Panc1 (cell line): ENCODE measurements at regions of chr3 and their contacts with region 1.

Region 1: DNA sequence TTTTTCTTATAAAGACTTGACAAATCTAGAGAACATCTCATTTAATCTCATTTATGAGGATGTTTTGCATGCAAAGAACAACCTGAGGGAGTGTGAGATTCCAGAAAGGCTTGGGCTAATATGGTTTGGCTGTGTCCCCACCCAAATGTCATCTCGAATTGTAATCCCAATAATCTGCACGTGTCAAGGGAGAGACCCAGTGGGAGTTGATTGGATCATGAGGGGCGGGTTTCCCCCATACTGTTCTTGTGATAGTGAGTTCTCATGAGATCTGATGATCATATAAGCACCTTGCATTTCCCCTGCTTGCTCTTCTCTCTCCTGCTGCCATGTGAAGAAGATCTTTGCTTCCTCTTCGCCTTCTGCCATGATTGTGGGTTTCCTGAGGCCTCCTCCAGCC is 103.0 kb downstream of the ZNF385D start:
- DNase-seq: no peak
- ATAC-seq: no peak
- H3K4me3 ChIP-seq: no peak overlapping the region
- H3K27ac ChIP-seq: no peak overlapping the region; the same call in 1 of the 2 replicates
- H3K4me1 ChIP-seq: 0 out of 2 replicates have a peak, but pooled peaks cover 3% of the 10 kb centered on the region
- H3K27me3 ChIP-seq: no peaks in the 10 kb centered on the region
- CTCF ChIP-seq: no peak

Region 2: DNA sequence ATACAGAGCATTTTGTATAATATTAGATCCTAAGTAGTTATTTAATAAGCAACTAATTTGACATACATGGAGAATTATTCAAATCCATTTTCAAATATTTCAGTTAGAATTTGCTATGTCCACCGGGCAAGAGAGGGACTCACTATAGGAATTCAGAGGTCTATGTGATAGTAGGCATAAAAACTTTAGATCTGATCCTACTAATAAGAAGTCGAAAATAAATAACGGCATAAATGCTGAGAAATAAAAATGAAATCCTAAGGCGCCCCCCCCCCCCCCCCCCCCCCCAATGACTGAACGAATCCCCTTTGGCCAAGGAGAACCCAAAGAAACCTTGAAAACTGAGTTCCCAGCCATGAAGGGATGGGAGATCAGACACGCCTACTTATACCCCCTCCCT is 22.4 kb after region 1 on chr3:
- CTCF ChIA-PET with region 1: no interaction called
- POLR2A ChIA-PET with region 1: interaction called, 11 read pairs
- in situ Hi-C with region 1: no loop called
- intact Hi-C with region 1: no loop called
- DNase-seq: no peak
- ATAC-seq: no peak
- H3K4me3 ChIP-seq: no peak overlapping the region
- H3K27ac ChIP-seq: no peak overlapping the region
- H3K4me1 ChIP-seq: no peaks in the 10 kb centered on the region
- H3K27me3 ChIP-seq: no peaks in the 10 kb centered on the region
- CTCF ChIP-seq: no peak